ENCODE measurements at regions of chr14 and their contacts with region 1.

Region 1: DNA sequence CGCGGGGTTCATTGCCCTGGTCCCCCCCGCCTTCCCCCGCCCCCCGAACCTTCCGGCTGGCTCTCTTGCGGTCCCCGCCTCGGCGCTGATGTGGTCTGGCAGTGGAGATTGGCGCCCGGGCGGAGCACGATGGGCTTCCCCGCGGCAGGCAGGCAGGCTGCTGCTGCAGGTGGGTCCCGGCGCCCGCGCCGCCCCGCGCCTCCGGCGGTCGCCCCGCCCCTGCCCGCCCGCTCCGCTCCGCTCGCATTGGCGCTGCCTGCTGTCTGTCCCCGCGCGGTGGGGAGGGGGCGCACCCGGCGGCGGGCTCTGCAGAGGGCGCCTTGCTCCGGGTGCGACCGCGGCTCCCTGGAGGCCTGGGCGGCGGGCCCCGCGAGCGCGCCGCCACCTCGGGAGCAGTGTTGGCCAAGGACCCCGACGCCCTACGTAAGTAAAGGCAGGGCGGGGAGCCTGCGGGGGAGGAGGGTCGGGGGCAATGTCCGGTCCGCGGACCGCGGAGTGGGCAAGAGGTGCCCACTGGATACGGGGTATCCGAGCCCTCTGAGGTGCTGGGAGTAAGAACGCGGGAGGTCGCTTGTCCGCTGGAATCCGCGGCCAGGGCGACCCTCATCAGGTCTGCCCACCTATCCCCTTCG is at the start of gene AKAP5:
- DNase-seq: peak; percentile 87
- ATAC-seq: peak; percentile 95
- H3K4me3 Mint-ChIP-seq: peak within 1 kb of the TSS; percentile 80
- H3K27ac Mint-ChIP-seq: peak within 1 kb of the TSS; percentile 61
- H3K4me1 Mint-ChIP-seq: peaks cover 12% of the 10 kb centered on the region
- H3K27me3 Mint-ChIP-seq: peaks cover 3% of the 10 kb centered on the region
- CTCF ChIP-seq: no peak
- total RNA-seq, gene AKAP5: 2.8 to 3.0 TPM (median 3.0 TPM) in 3 replicates

Region 2: GRCh38 chr14:64324895-64325294 is 140.4 kb before region 1 on chr14:
- CTCF ChIA-PET with region 1: no interaction called
- POLR2A ChIA-PET with region 1: no interaction called
- DNase-seq: no peak
- ATAC-seq: no peak
- H3K4me3 Mint-ChIP-seq: no peak overlapping the region
- H3K27ac Mint-ChIP-seq: no peak overlapping the region
- H3K4me1 Mint-ChIP-seq: peaks cover 8% of the 10 kb centered on the region
- H3K27me3 Mint-ChIP-seq: no peaks in the 10 kb centered on the region
- CTCF ChIP-seq: no peak

Region 3: DNA sequence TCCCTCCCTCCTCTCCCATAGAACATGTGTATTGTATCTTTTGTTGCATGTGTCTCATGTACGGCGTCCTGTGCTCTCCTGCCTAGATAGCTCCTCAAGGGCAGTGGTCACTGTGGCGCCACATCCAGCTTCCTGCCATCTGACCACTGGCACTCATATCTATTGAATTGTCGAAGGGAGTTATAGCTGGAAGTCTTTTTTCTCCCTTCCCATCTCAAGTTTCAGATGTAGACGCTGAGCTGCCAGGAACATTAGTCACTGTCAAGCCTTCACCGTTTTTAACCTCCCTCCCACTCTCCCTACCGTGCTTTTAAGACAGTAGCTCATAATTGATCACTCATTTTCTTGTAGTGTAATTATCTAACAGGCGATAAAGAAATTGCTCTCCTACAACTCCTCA is 44.1 kb before region 1 on chr14:
- CTCF ChIA-PET with region 1: no interaction called
- POLR2A ChIA-PET with region 1: interaction called, 10 read pairs
- DNase-seq: no peak
- ATAC-seq: no peak
- H3K4me3 Mint-ChIP-seq: no peak overlapping the region
- H3K27ac Mint-ChIP-seq: no peak overlapping the region
- H3K4me1 Mint-ChIP-seq: no peaks in the 10 kb centered on the region
- H3K27me3 Mint-ChIP-seq: no peaks in the 10 kb centered on the region
- CTCF ChIP-seq: no peak

Region 4: GRCh38 chr14:64434528-64434927 is 30.8 kb before region 1 on chr14:
- CTCF ChIA-PET with region 1: interaction called, 13 read pairs
- POLR2A ChIA-PET with region 1: no interaction called
- DNase-seq: no peak
- ATAC-seq: no peak
- H3K4me3 Mint-ChIP-seq: no peak overlapping the region
- H3K27ac Mint-ChIP-seq: peak overlapping the region; percentile 82; the same call in 1 of the 2 replicates
- H3K4me1 Mint-ChIP-seq: no peaks in the 10 kb centered on the region
- H3K27me3 Mint-ChIP-seq: no peaks in the 10 kb centered on the region
- CTCF ChIP-seq: no peak

Region 5: DNA sequence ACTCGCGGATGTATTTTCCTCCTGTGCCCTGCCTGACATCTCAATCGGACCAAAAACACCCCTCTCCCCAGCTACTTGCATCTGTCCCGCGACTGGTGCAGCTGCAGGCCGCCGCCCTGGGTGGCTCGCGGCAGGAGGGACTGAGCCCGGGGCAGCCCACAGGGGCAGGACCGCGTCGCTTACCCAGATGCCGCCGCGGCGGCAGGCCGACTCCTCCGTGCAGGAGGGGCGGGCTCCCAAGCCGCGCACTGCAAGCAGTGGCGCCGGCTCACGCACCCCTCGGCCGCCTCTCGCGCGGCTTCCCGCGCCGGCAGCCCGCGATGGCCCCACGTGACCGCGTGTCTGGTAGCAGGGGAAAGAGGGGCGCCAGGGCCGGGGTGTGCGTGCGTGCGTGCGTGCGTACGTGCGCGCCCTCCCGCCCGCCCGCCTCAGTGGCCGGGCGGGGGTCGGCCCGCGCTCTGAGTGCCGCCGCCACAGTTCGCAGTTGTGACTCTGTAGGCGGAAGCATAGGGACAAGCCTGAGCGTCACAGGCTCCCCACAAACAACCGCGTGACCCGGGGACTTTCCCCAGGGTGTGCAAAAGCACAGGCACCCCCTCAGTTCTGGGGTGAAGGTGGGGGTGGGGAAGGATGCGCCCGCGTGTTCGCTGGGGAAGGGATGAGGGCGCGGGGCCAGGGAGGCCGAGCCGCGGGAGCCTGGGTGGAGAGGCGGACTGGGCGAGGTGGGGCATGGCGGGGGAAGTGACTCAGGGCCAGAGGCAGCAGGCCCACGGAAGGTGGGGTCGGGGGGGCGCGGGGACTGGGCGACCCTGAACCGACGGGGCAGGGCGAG is 38.4 kb after region 1 on chr14 and contains the start of gene ZBTB25:
- CTCF ChIA-PET with region 1: no interaction called
- POLR2A ChIA-PET with region 1: interaction called, 14 read pairs
- DNase-seq: peak; percentile 87
- ATAC-seq: peak; percentile 70
- H3K4me3 Mint-ChIP-seq: peak within 1 kb of the TSS; percentile 81
- H3K27ac Mint-ChIP-seq: peak within 1 kb of the TSS; percentile 99
- H3K4me1 Mint-ChIP-seq: peaks cover 50% of the 10 kb centered on the region
- H3K27me3 Mint-ChIP-seq: no peaks in the 10 kb centered on the region
- CTCF ChIP-seq: no peak
- total RNA-seq, gene ZBTB25: 11.9 to 14.0 TPM (median 13.1 TPM) in 3 replicates

Measured in WTC11 (cell line).